ENCODE measurements at regions of chr11 and their contacts with region 1.

Region 1: GRCh38 chr11:78188286-78189173 is at the starts of genes KCTD21 and USP35:
- DNase-seq: peak; percentile 97
- H3K4me3 ChIP-seq: peak within 1 kb of the TSS; percentile 68 to 90 (median 77)
- H3K27ac ChIP-seq: peak within 1 kb of the TSS; percentile 76 to 90 (median 89)
- H3K4me1 ChIP-seq: peaks cover 0 to 37% (median 29%) of the 10 kb centered on the region in 4 donors
- H3K27me3 ChIP-seq: no peaks in the 10 kb centered on the region
- CTCF ChIP-seq: no peak
- EP300 ChIP-seq: no peak
- POLR2A ChIP-seq: peak; percentile 71
- total RNA-seq, gene KCTD21: 10.9 to 55.0 (median 29.2) TPM
- total RNA-seq, gene USP35: 7.4 to 17.2 (median 10.9) TPM

Region 2: GRCh38 chr11:78149646-78150045 is 38.9 kb before region 1 on chr11:
- in situ Hi-C with region 1: no loop called
- intact Hi-C with region 1: loop called (anchors 5 kb)
- DNase-seq: no peak
- H3K4me3 ChIP-seq: no peak overlapping the region
- H3K27ac ChIP-seq: no peak overlapping the region
- H3K4me1 ChIP-seq: no peaks in the 10 kb centered on the region
- H3K27me3 ChIP-seq: no peaks in the 10 kb centered on the region
- CTCF ChIP-seq: peak in 2 of 5 experiments; percentile 12
- EP300 ChIP-seq: no peak
- POLR2A ChIP-seq: no peak